Dendritic cell treated with granulocyte-macrophage colony-stimulating factor and Interleukin-4, amounts not matched to agents 40 ng/mL and 50 ng/mL, for 4 days (primary cell): ENCODE measurements at regions of chr9 and their contacts with region 1.

Region 1: GRCh38 chr9:7536310-7536939 is 263.2 kb downstream of the DMAC1 start:
- H3K4me3 Mint-ChIP-seq: no peak overlapping the region
- H3K27ac Mint-ChIP-seq: no peak overlapping the region
- H3K4me1 Mint-ChIP-seq: no peaks in the 10 kb centered on the region
- H3K27me3 Mint-ChIP-seq: no peaks in the 10 kb centered on the region

Region 2: DNA sequence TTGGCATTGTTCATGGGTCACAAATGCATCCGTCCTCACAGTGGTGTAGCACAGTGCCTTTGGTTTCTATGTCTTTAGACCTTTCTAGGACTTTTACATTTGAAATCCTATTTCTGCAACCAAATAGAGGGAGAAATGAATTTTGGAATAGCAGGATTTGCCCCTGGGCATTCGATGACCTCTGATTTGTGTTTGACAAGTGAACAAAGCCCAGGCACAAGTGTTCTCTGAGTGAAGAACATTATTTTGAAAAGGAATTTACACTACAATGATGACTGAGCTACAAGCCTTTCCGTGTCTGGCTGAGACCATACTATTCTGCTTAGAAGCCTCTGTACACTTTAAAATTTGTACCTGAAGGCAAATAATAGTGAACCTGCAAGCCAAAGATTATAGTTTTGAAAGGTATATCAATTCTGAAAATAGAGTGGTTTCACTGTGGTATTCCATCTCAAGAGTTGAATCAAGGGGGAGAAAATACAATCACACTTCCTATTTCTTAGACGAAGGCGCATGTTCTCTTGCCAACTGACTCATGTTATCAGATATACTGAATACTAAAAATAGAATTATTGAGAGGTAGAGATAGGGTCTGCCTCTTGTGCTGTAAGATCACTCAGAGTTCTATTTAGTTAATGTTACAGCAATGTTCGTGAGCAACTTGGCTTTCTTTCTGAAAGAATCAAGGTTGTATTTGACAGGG is 481.1 kb before region 1 on chr9:
- intact Hi-C with region 1: loop called (anchors 10 kb)
- H3K4me3 Mint-ChIP-seq: no peak overlapping the region
- H3K27ac Mint-ChIP-seq: no peak overlapping the region
- H3K4me1 Mint-ChIP-seq: no peaks in the 10 kb centered on the region
- H3K27me3 Mint-ChIP-seq: no peaks in the 10 kb centered on the region

Region 3: GRCh38 chr9:7402334-7403027 is 133.9 kb before region 1 on chr9:
- intact Hi-C with region 1: loop called (anchors 1 kb)
- H3K4me3 Mint-ChIP-seq: no peak overlapping the region
- H3K27ac Mint-ChIP-seq: no peak overlapping the region
- H3K4me1 Mint-ChIP-seq: peaks cover 18% of the 10 kb centered on the region
- H3K27me3 Mint-ChIP-seq: peaks cover 5% of the 10 kb centered on the region

Region 4: DNA sequence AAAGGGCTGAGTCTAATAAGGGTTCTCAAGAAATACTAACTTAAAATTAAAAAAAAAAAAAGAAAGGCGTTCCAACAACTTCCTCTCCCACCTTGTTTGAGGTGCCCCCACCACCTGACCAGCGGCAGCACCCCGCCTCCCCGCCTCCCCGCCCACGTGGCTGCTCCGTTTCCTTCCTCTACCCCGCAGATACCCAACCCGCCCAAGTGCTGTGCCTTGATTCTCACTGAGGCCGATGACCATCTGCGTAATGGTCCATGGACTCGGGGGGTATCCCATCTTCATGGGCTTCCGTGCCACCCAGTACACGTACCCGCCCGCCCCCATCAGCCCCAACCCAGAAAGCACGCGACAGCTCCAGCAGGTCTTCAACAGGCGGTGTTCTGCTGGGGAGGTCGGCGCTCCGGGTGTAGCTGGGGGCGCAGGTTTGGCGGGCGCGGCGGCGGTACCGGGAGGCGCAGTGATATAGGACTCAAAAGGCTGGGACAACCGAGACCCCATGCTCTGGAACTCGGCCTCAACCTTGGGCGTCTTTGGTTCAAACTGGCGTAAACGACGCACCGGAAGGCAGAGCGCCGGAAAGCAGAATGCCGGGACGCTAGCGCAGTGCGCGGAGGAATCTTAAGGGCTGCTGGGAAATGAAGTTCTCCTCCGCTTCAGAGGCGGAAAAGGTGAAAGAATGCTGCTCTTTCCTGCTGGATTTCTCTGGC is 263.0 kb after region 1 on chr9 and contains the start of gene DMAC1:
- intact Hi-C with region 1: no loop called
- H3K4me3 Mint-ChIP-seq: peak within 1 kb of the TSS; percentile 89
- H3K27ac Mint-ChIP-seq: peak within 1 kb of the TSS; percentile 91
- H3K4me1 Mint-ChIP-seq: peaks cover 12% of the 10 kb centered on the region
- H3K27me3 Mint-ChIP-seq: peaks cover 1% of the 10 kb centered on the region